Sciatic nerve (tissue), 2 donors: ENCODE measurements at regions of chr6 and their contacts with region 1.

Region 1: DNA sequence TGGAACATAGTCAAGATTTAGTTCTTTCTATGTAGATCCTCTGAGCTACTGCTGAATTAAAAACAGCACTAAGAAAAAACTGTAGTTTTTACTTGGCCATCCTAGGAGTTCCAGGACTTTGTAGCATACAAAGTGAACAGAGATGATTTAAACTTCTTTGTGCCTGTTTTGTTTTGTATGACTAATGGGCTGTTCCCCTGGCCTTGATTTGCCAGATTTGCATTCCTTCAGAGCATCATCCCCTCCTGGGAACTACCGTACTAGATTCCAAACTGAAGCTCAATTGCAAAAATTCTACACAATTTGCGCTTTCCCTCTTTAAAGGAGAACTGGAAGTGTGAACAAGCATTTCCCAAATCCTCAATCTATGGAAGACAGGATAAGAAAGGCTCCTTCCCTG is 23.1 kb downstream of the ACOT13 start:
- DNase-seq: no peak
- ATAC-seq: no peak

Region 2: GRCh38 chr6:24581084-24581669 is 108.8 kb before region 1 on chr6:
- intact Hi-C with region 1: loop called (anchors 10 kb)
- DNase-seq: peak; percentile 87
- ATAC-seq: peak; percentile 85